ENCODE measurements at regions of chr22 and their contacts with region 1.

Region 1: DNA sequence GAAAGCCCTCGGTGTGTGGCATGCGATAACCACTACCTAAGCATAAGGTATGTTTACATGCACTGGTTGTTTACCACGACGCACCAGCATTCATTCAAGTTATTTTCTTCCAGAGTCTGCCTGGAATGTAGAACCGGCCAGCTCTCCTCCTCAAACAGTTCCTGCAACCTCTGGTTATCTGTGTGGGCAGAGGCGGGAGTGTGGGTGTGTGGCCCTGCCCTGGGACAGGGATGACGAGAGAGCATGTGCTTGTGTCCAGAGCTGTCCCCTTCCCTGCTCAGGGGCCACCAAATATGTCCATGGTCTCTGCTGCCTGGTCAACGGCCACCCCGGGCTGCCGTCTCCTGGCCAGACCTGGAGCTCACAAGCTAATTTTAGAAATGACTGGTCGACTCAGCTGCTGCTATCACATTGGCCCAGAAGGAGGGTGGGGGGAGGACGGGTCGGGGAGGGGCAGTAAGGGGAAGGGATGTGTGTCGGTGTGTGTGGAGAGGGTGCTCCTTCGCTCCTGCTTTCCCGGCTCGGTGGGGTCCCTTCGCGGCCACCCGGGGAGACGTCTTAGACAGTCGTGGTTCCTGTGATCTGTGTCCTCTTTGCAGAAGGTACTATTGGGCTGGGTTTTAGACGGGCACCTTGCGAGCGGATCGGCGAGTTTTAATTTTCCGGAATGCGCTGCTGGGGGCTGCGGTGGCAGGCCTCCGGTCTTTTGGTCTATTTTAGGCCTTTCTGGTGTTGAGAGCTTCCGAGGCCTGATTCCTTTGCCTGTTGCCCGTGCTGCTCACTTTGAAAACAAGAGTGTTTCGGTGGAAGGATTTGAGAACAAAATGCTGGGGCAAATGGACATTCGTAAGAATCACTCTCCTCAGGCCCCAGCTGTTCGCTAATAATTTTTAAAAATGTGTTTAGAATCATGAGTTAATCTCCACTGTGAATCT is at the start of gene MYO18B:
- DNase-seq: peak; percentile 85 to 90 (median 89)
- ATAC-seq: peak; percentile 91
- H3K4me3 ChIP-seq: peak within 1 kb of the TSS; percentile 78
- H3K27ac ChIP-seq: peak within 1 kb of the TSS; percentile 99
- H3K4me1 ChIP-seq: peaks cover 12 to 34% of the 10 kb centered on the region in 2 experiments; a peak in 4 of 5 replicates
- H3K27me3 ChIP-seq: no peaks in the 10 kb centered on the region
- CTCF ChIP-seq: peak; percentile 30 to 34 (median 33); a peak in 3 of 6 replicates
- EP300 ChIP-seq: peak; percentile 69
- POLR2A ChIP-seq: peak; percentile 74
- RAD21 ChIP-seq: peak in 1 of 2 experiments; percentile 39; a peak in 2 of 4 replicates
- polyA plus RNA-seq, gene MYO18B: 0.06 to 0.18 TPM

Region 2: GRCh38 chr22:25465949-25466348 is 276.0 kb before region 1 on chr22:
- CTCF ChIA-PET with region 1: no interaction called
- POLR2A ChIA-PET with region 1: no interaction called
- in situ Hi-C with region 1: no loop called
- intact Hi-C with region 1: no loop called
- DNase-seq: no peak
- ATAC-seq: no peak
- H3K4me3 ChIP-seq: no peak overlapping the region
- H3K27ac ChIP-seq: no peak overlapping the region
- H3K4me1 ChIP-seq: no peaks in the 10 kb centered on the region
- H3K27me3 ChIP-seq: no peaks in the 10 kb centered on the region
- CTCF ChIP-seq: no peak
- EP300 ChIP-seq: no peak
- POLR2A ChIP-seq: no peak
- RAD21 ChIP-seq: no peak

Region 3: GRCh38 chr22:25572708-25573171 is 169.2 kb before region 1 on chr22:
- CTCF ChIA-PET with region 1: no interaction called
- POLR2A ChIA-PET with region 1: no interaction called
- in situ Hi-C with region 1: no loop called
- intact Hi-C with region 1: no loop called
- DNase-seq: no peak
- ATAC-seq: no peak
- H3K4me3 ChIP-seq: no peak overlapping the region
- H3K27ac ChIP-seq: no peak overlapping the region
- H3K4me1 ChIP-seq: no peaks in the 10 kb centered on the region; a peak in 2 of 5 replicates
- H3K27me3 ChIP-seq: no peaks in the 10 kb centered on the region
- CTCF ChIP-seq: no peak
- EP300 ChIP-seq: no peak
- POLR2A ChIP-seq: no peak
- RAD21 ChIP-seq: no peak

Region 4: GRCh38 chr22:25729016-25729995 is 12.7 kb before region 1 on chr22:
- CTCF ChIA-PET with region 1: no interaction called
- POLR2A ChIA-PET with region 1: interaction called, 12 read pairs
- in situ Hi-C with region 1: no loop called
- intact Hi-C with region 1: no loop called
- DNase-seq: no peak
- ATAC-seq: no peak
- H3K4me3 ChIP-seq: no peak overlapping the region
- H3K27ac ChIP-seq: no peak overlapping the region
- H3K4me1 ChIP-seq: peaks cover 3 to 17% of the 10 kb centered on the region in 2 experiments; a peak in 4 of 5 replicates
- H3K27me3 ChIP-seq: no peaks in the 10 kb centered on the region
- CTCF ChIP-seq: no peak
- EP300 ChIP-seq: no peak
- POLR2A ChIP-seq: no peak
- RAD21 ChIP-seq: no peak